B cell (primary cell): ENCODE measurements at regions of chr15 and their contacts with region 1.

Region 1: GRCh38 chr15:88620995-88621772 is at the start of gene AEN:
- DNase-seq: peak; percentile 96
- ATAC-seq: peak; percentile 97
- H3K4me3 ChIP-seq: peak within 1 kb of the TSS; percentile 56 to 88 (median 80)
- H3K4me3 Mint-ChIP-seq: peak within 1 kb of the TSS; percentile 85
- H3K27ac ChIP-seq: peak within 1 kb of the TSS; percentile 72 to 86
- H3K27ac Mint-ChIP-seq: peak within 1 kb of the TSS; percentile 94
- H3K4me1 ChIP-seq: peaks cover 36 to 50% of the 10 kb centered on the region in 2 donors
- H3K4me1 Mint-ChIP-seq: peaks cover 47% of the 10 kb centered on the region
- H3K27me3 ChIP-seq: peaks cover 0 to 3% (median 0%) of the 10 kb centered on the region in 4 experiments
- H3K27me3 Mint-ChIP-seq: peaks cover 4% of the 10 kb centered on the region
- CTCF ChIP-seq: no peak
- total RNA-seq, gene AEN: 18.5 and 24.0 TPM in 2 replicates

Region 2: GRCh38 chr15:87347525-87348515 is 1273.4 kb before region 1 on chr15:
- CTCF ChIA-PET with region 1: no interaction called
- POLR2A ChIA-PET with region 1: no interaction called
- intact Hi-C with region 1: no loop called
- DNase-seq: no peak
- ATAC-seq: no peak
- H3K4me3 ChIP-seq: no peak overlapping the region
- H3K4me3 Mint-ChIP-seq: no peak overlapping the region
- H3K27ac ChIP-seq: no peak overlapping the region
- H3K27ac Mint-ChIP-seq: no peak overlapping the region
- H3K4me1 ChIP-seq: no peaks in the 10 kb centered on the region
- H3K4me1 Mint-ChIP-seq: no peaks in the 10 kb centered on the region
- H3K27me3 ChIP-seq: no peaks in the 10 kb centered on the region
- H3K27me3 Mint-ChIP-seq: no peaks in the 10 kb centered on the region
- CTCF ChIP-seq: no peak

Region 3: DNA sequence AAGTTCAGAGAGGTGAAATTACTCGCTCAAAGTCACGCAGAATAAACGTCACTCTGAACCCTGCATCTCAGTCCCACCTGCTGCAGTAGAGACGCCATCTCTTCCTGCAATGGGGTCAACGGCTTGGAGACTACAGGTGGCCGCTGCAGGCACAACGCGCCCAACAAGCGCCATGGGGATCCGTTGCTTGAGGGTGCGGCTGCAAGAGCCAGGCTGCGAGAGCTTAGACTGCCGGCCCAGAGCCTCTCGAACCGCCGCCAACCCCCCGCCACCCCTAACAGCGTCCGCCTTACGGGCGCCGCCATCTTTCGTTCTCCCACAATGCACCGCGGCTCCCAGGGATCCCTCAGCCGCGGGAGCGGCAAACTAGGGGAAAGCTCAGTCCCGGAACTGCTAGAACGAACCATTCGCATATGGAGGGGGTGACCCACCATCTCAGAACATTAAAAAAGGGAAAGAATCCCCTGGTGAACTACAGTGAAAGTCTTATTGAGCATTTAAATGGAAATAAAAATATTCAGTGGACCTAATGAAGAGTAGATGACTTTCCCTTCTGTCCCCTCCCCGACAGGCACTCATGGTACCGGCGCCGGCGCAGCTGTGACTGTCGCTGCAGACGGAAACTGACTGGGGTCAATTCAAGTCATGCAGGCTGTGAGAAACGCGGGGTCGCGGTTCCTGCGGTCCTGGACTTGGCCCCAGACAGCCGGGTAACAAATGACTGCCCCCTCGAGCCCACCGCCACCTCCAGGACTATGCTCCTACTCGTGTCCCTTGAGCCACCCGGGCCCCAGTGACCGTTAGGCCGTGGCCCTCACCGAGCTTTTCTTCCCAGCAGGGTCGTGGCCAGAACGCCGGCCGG is 153.9 kb before region 1 on chr15 and contains the starts of genes MRPL46 and MRPS11:
- CTCF ChIA-PET with region 1: interaction called, 8 read pairs
- POLR2A ChIA-PET with region 1: no interaction called
- intact Hi-C with region 1: loop called (anchors 5 kb)
- DNase-seq: peak; percentile 95
- ATAC-seq: peak; percentile 92
- H3K4me3 ChIP-seq: peak within 1 kb of the TSS; percentile 77 to 99 (median 87)
- H3K4me3 Mint-ChIP-seq: peak within 1 kb of the TSS; percentile 97
- H3K27ac ChIP-seq: peak within 1 kb of the TSS; percentile 67 to 96
- H3K27ac Mint-ChIP-seq: peak within 1 kb of the TSS; percentile 99
- H3K4me1 ChIP-seq: peaks cover 14 to 17% of the 10 kb centered on the region in 2 donors
- H3K4me1 Mint-ChIP-seq: peaks cover 26% of the 10 kb centered on the region
- H3K27me3 ChIP-seq: no peaks in the 10 kb centered on the region
- H3K27me3 Mint-ChIP-seq: no peaks in the 10 kb centered on the region
- CTCF ChIP-seq: no peak
- total RNA-seq, gene MRPL46: 22.6 and 24.6 TPM in 2 replicates
- total RNA-seq, gene MRPS11: 37.9 and 40.1 TPM in 2 replicates

Region 4: GRCh38 chr15:88649286-88649733 is 28.1 kb after region 1 on chr15:
- CTCF ChIA-PET with region 1: interaction called, 120 read pairs
- POLR2A ChIA-PET with region 1: no interaction called
- intact Hi-C with region 1: no loop called
- DNase-seq: peak; percentile 73
- ATAC-seq: peak; percentile 74
- H3K4me3 ChIP-seq: peak overlapping the region in 1 of 5 experiments; percentile 37
- H3K4me3 Mint-ChIP-seq: peak overlapping the region; percentile 72
- H3K27ac ChIP-seq: peak overlapping the region; percentile 76 to 91
- H3K27ac Mint-ChIP-seq: peak overlapping the region; percentile 96
- H3K4me1 ChIP-seq: peaks cover 85 to 96% of the 10 kb centered on the region in 2 donors
- H3K4me1 Mint-ChIP-seq: peaks cover 84% of the 10 kb centered on the region
- H3K27me3 ChIP-seq: no peaks in the 10 kb centered on the region
- H3K27me3 Mint-ChIP-seq: no peaks in the 10 kb centered on the region
- CTCF ChIP-seq: no peak

Region 5: GRCh38 chr15:88701561-88702095 is 80.4 kb after region 1 on chr15:
- CTCF ChIA-PET with region 1: interaction called, 10 read pairs
- POLR2A ChIA-PET with region 1: no interaction called
- intact Hi-C with region 1: loop called (anchors 1 kb)
- DNase-seq: peak; percentile 26
- ATAC-seq: peak; percentile 31
- H3K4me3 ChIP-seq: no peak overlapping the region
- H3K4me3 Mint-ChIP-seq: no peak overlapping the region
- H3K27ac ChIP-seq: no peak overlapping the region
- H3K27ac Mint-ChIP-seq: no peak overlapping the region
- H3K4me1 ChIP-seq: peaks cover 7 to 12% of the 10 kb centered on the region in 2 donors
- H3K4me1 Mint-ChIP-seq: peaks cover 12% of the 10 kb centered on the region
- H3K27me3 ChIP-seq: peaks cover 0 to 17% (median 5%) of the 10 kb centered on the region in 4 experiments
- H3K27me3 Mint-ChIP-seq: peaks cover 30% of the 10 kb centered on the region
- CTCF ChIP-seq: peak; percentile 31

Region 6: DNA sequence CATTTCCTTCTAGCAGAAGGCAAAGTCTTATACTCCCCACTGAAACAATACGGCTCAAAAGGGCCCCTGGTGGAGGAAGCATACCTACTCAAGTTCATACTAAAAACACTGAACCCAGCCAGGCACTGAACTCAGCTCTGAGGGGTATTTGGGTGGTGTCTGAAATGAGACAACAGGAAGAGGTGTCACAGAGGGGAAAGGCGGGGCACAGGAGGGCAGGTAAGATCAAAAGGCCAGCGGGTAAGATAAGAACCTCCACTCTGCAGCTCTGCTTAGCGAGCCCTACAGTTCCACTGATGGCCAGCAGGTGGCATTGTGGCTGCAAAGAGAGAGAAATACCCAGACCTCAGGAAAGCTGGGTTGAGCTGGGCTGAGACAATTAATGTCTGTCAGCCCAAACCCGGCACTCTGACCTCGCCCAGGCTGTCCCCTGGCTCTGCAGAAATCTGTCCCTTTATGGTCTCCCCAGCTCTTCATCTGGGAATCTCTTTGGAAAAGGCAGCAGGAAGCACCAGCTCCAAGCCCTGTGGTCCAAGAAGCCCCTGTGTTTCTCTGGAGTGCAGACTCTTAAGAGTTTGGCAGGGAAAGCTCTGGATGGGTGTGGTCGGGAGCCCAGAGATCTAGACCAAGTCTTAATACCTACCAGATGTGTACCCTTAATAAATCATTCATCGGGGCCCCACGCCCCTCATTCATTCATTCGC is 283.6 kb after region 1 on chr15:
- CTCF ChIA-PET with region 1: interaction called, 21 read pairs
- POLR2A ChIA-PET with region 1: no interaction called
- intact Hi-C with region 1: loop called (anchors 2 kb)
- DNase-seq: peak; percentile 83
- ATAC-seq: peak; percentile 88
- H3K4me3 ChIP-seq: no peak overlapping the region
- H3K4me3 Mint-ChIP-seq: no peak overlapping the region
- H3K27ac ChIP-seq: no peak overlapping the region
- H3K27ac Mint-ChIP-seq: no peak overlapping the region
- H3K4me1 ChIP-seq: peaks cover 3 to 8% of the 10 kb centered on the region in 2 donors
- H3K4me1 Mint-ChIP-seq: peaks cover 9% of the 10 kb centered on the region
- H3K27me3 ChIP-seq: no peaks in the 10 kb centered on the region
- H3K27me3 Mint-ChIP-seq: no peaks in the 10 kb centered on the region
- CTCF ChIP-seq: peak; percentile 99

Region 7: GRCh38 chr15:89129123-89129815 is 508.1 kb after region 1 on chr15:
- CTCF ChIA-PET with region 1: interaction called, 12 read pairs
- POLR2A ChIA-PET with region 1: no interaction called
- intact Hi-C with region 1: loop called (anchors 1 kb)
- DNase-seq: peak; percentile 66
- ATAC-seq: peak; percentile 66
- H3K4me3 ChIP-seq: no peak overlapping the region
- H3K4me3 Mint-ChIP-seq: no peak overlapping the region
- H3K27ac ChIP-seq: no peak overlapping the region
- H3K27ac Mint-ChIP-seq: no peak overlapping the region
- H3K4me1 ChIP-seq: peaks cover 4 to 15% of the 10 kb centered on the region in 2 donors
- H3K4me1 Mint-ChIP-seq: peaks cover 16% of the 10 kb centered on the region
- H3K27me3 ChIP-seq: no peaks in the 10 kb centered on the region
- H3K27me3 Mint-ChIP-seq: no peaks in the 10 kb centered on the region
- CTCF ChIP-seq: peak; percentile 86